ENCODE measurements at regions of chr3 and their contacts with region 1.

Region 1: GRCh38 chr3:1272546-1273265 is 179.9 kb downstream of the CNTN6 start:
- DNase-seq: no peak

Region 2: DNA sequence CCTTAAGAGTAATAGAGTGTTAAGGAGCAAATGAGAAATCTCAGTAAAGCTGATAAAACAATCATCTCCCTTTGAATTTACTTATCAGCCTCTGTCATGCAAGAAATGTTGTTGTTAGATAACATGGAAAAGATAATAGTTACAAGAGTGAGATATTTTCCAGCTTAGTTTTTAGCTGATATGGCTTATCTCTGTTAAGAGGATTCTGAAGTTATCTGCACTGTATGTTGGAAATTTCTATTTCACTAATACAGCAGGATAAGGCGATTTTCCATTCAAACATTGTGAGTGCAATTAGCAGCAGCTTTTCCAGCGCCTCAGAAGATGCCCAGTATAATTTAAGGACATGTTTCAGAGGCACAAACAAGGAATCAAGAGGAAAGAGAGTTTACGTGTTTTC is 83.0 kb after region 1 on chr3:
- intact Hi-C with region 1: loop called in 1 of 2 experiments (anchors 5 kb)
- DNase-seq: no peak

Region 3: GRCh38 chr3:1421577-1421976 is 148.9 kb after region 1 on chr3:
- intact Hi-C with region 1: no loop called
- DNase-seq: no peak